ENCODE measurements at regions of chr3 and their contacts with region 1.

Region 1: DNA sequence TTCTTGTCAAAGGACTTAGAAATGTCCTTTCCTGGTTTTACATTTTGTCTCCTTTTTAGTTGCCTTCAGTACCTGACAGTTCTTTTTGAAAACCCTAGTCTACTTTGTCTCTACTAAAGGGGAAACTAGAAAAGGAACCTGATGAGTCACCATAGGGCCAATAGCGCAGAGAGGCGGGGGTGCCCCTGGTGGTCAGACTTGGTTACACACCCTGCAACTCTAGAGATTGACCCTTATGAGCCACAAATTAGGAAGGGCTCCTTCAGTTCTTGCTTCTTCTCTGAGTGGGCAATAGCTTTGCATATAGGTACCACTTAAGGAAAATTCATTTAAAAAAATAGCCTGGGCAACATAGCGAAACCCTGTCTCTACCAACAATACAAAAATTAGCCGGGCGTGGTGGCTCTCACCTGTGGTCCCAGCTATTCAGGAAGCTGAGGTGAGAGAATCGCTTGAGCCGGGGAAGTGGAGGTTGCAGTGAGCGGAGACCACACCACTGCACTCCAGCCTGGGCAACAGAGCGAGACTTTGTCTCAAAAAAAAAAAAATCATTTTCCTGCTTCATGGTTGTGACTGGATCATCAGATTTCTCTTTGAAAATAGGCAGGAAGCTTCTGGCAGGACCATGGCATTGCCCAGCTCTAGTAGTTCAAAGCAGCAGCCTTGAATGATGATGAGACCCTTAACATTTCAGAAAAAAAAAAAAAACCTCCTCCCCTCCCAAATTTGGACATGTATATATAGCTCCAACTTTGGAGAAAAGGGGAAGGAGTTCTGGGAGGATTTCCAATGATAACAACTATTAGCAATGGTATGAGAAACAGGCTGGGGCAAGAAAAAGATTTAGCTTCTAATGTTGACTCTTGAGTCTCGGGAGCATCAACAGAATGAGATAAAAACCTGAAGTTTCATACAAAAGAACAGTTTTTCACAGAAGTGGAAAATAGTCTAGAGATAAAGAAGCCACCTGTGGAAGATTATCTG is 45.2 kb upstream of the RASA2 start:
- DNase-seq: peak; percentile 51 to 74
- H3K4me3 ChIP-seq: no peak overlapping the region
- H3K27ac ChIP-seq: no peak overlapping the region
- H3K4me1 ChIP-seq: 0 out of 2 replicates have a peak, but pooled peaks cover 3% of the 10 kb centered on the region
- H3K27me3 ChIP-seq: no peaks in the 10 kb centered on the region
- CTCF ChIP-seq: peak; percentile 91

Region 2: GRCh38 chr3:141262308-141262705 is 179.4 kb before region 1 on chr3:
- CTCF ChIA-PET with region 1: no interaction called
- POLR2A ChIA-PET with region 1: no interaction called
- intact Hi-C with region 1: no loop called
- DNase-seq: no peak
- H3K4me3 ChIP-seq: no peak overlapping the region
- H3K27ac ChIP-seq: no peak overlapping the region
- H3K4me1 ChIP-seq: no peaks in the 10 kb centered on the region
- H3K27me3 ChIP-seq: no peaks in the 10 kb centered on the region
- CTCF ChIP-seq: no peak

Region 3: GRCh38 chr3:141368062-141368924 is 73.4 kb before region 1 on chr3 and contains the start of gene ZBTB38:
- CTCF ChIA-PET with region 1: no interaction called
- POLR2A ChIA-PET with region 1: no interaction called
- intact Hi-C with region 1: loop called (anchors 2 kb)
- DNase-seq: peak; percentile 88 to 96
- H3K4me3 ChIP-seq: no peak within 1 kb of the TSS; the same call in 1 of the 2 replicates
- H3K27ac ChIP-seq: peak within 1 kb of the TSS; percentile 63
- H3K4me1 ChIP-seq: peaks cover 38% of the 10 kb centered on the region
- H3K27me3 ChIP-seq: no peaks in the 10 kb centered on the region
- CTCF ChIP-seq: no peak
- total RNA-seq, gene ZBTB38: 18.5 and 21.8 TPM in 2 replicates

Region 4: GRCh38 chr3:141487521-141488252 is 46.0 kb after region 1 on chr3:
- CTCF ChIA-PET with region 1: no interaction called
- POLR2A ChIA-PET with region 1: no interaction called
- intact Hi-C with region 1: no loop called
- DNase-seq: peak; percentile 72 to 82
- H3K4me3 ChIP-seq: peak overlapping the region; percentile 76
- H3K27ac ChIP-seq: peak overlapping the region; percentile 90
- H3K4me1 ChIP-seq: peaks cover 50% of the 10 kb centered on the region
- H3K27me3 ChIP-seq: no peaks in the 10 kb centered on the region
- CTCF ChIP-seq: no peak